SK-N-SH (cell line): ENCODE measurements at regions of chr1 and their contacts with region 1.

Region 1: GRCh38 chr1:150813058-150813707 is 5.1 kb upstream of the CTSK start:
- DNase-seq: peak; percentile 55
- H3K4me3 ChIP-seq: no peak overlapping the region; a peak in 1 of 4 replicates
- H3K27ac ChIP-seq: no peak overlapping the region
- H3K4me1 ChIP-seq: no peaks in the 10 kb centered on the region
- H3K27me3 ChIP-seq: no peaks in the 10 kb centered on the region
- CTCF ChIP-seq: peak; percentile 75
- EP300 ChIP-seq: no peak
- RAD21 ChIP-seq: peak; percentile 85

Region 2: GRCh38 chr1:150621497-150622302 is 191.5 kb before region 1 on chr1:
- CTCF ChIA-PET with region 1: interaction called, 20 read pairs
- POLR2A ChIA-PET with region 1: no interaction called
- DNase-seq: peak; percentile 47
- H3K4me3 ChIP-seq: no peak overlapping the region
- H3K27ac ChIP-seq: peak overlapping the region in 1 of 2 experiments; percentile 72; a peak in 1 of 4 replicates
- H3K4me1 ChIP-seq: peaks cover 10 to 22% of the 10 kb centered on the region in 2 experiments
- H3K27me3 ChIP-seq: no peaks in the 10 kb centered on the region
- CTCF ChIP-seq: peak; percentile 82
- EP300 ChIP-seq: no peak
- RAD21 ChIP-seq: peak; percentile 57

Region 3: GRCh38 chr1:150718225-150718891 is 94.8 kb before region 1 on chr1:
- CTCF ChIA-PET with region 1: no interaction called
- POLR2A ChIA-PET with region 1: no interaction called
- DNase-seq: no peak
- H3K4me3 ChIP-seq: no peak overlapping the region
- H3K27ac ChIP-seq: no peak overlapping the region
- H3K4me1 ChIP-seq: no peaks in the 10 kb centered on the region
- H3K27me3 ChIP-seq: no peaks in the 10 kb centered on the region
- CTCF ChIP-seq: no peak
- EP300 ChIP-seq: no peak
- RAD21 ChIP-seq: no peak

Region 4: DNA sequence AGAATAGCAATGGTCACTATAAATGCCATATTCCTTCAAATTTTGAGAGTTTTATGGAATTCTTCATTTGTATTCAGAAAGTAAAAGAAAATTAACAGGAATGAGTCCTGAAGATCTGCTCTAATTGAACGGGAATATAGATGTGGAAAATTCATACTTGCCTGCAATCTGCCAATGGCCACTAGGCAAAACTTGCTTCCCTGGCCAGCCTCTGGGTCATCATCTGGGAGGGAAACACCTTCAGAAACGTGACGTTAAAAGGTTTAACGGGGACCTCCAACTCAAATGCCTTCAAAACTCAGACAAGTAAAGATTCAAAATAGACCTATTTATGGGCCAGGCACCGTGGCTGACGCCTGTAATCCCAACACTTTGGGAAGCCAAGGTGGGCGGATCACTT is 16.6 kb after region 1 on chr1:
- CTCF ChIA-PET with region 1: interaction called, 14 read pairs
- POLR2A ChIA-PET with region 1: no interaction called
- DNase-seq: peak; percentile 15
- H3K4me3 ChIP-seq: no peak overlapping the region
- H3K27ac ChIP-seq: no peak overlapping the region
- H3K4me1 ChIP-seq: no peaks in the 10 kb centered on the region
- H3K27me3 ChIP-seq: no peaks in the 10 kb centered on the region
- CTCF ChIP-seq: peak; percentile 52
- EP300 ChIP-seq: no peak
- RAD21 ChIP-seq: no peak